Left colon (tissue), 2 donors: ENCODE measurements at regions of chr12 and their contacts with region 1.

Region 1: GRCh38 chr12:56468216-56469006 is at the start of gene SPRYD4:
- DNase-seq: peak; percentile 92 to 95
- ATAC-seq: peak; percentile 96
- total RNA-seq, gene SPRYD4: 3.9 to 5.2 TPM

Region 2: DNA sequence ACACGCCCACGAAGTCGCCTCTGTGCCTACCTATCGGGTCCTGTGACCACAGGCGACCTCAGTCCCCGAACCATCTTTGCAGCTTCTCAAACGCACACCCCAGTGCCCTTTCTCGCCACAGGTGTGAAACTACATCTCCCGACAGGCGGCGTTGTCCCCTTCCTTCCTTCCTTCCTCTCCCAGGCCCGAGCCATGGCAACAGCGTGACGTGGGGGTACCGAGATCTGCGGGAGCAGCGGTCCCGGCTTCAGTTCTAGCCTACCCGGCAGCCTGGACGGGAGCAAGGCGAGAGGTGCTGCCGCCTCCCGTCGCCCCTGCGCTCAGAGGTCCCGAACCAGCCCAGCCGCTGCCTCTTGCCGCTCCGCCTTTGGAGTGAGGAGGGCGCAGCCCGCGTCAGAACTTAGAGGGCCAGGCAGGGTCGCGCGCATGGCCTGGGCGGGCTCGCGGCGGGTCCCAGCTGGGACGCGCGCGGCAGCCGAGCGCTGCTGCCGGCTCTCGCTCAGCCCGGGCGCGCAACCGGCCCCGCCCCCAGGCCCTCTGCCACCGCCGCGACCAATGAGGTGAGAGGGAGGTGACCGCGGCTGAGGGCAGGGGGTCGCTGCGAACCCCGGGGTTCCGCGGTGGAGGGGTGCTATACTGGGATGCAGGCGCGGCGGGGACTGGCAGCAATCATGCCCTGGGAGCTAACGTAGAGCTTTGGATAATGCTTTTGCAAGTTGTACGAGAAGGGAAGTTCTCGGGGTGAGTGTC is 201.5 kb before region 1 on chr12 and contains the start of gene COQ10A:
- intact Hi-C with region 1: no loop called
- DNase-seq: peak; percentile 91 to 95
- ATAC-seq: peak; percentile 89
- total RNA-seq, gene COQ10A: 4.1 to 5.3 TPM

Region 3: DNA sequence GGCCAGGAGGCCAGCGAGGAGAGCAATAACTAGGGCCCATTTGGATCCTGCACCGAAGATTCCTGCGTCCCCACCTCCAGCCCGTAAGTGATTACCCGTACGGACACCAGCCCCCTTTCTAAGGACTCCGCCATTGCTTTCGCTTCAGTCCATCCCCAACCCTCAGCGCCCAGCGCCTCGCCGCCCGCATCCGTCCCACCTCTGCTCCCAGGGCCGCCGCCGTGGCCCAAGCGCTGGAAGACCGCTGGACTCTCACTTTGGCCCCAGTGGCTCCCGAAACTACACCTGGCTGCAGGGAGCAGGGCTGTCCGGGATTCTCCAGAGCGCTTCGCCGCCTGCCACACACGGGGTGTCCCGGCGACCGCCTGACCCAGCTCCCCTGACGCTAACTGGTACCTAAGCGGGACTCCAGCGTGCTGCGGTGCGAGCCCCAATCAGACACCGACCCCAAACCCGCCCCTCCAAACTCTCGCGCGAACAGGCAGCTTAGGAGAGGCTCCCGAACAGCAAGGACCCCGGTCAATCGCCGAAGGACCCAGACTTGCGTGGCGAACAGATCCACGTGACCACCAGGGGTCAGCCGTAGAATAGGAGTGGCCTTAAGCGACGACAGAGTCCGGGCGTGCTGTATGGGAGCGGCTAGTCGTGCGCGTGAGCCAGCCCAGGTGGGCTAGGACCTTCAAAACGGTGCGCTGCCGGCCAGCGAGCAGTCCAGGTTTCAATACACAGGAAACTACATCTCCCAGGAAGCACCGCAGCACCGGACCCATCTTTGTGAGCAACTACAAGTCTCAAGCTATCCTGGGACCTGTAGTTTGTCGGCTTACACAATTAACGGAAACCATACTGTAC is 152.6 kb before region 1 on chr12 and contains the start of gene CNPY2:
- intact Hi-C with region 1: loop called in 1 of 2 experiments (anchors 10 kb)
- DNase-seq: peak; percentile 96 to 97
- ATAC-seq: peak; percentile 88
- total RNA-seq, gene CNPY2: 70.8 to 90.5 TPM

Region 4: DNA sequence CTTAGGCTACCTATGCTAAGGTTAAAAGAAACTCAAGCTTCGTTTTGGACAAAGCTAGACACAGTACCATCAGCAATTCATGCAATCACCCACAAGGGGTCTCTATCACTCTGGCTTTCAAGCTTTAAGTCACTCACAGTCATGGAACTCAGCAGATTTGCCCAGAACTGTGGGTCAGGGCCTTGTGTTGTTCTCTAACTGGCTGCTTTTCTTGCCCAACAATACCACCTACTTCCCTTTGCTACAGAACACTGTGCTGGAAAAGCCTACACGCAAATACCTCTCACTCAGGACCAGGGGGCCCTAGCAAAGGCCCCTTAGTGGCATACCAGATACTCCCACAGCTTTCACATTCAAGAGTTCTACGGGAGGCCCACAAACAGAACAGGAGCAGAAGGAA is 601.1 kb after region 1 on chr12:
- intact Hi-C with region 1: no loop called
- DNase-seq: peak in 1 of 2 donors; percentile 58
- ATAC-seq: peak; percentile 97